GM12878 (cell line): ENCODE measurements at regions of chr11 and their contacts with region 1.

Region 1: GRCh38 chr11:61733120-61733978 is 19.1 kb upstream of the MYRF start:
- DNase-seq: peak; percentile 12
- ATAC-seq: peak; percentile 95
- H3K4me3 ChIP-seq: no peak overlapping the region
- H3K27ac ChIP-seq: no peak overlapping the region
- H3K4me1 ChIP-seq: no peaks in the 10 kb centered on the region
- H3K27me3 ChIP-seq: no peaks in the 10 kb centered on the region; a peak in 1 of 4 replicates
- CTCF ChIP-seq: peak; percentile 99
- EP300 ChIP-seq: no peak
- POLR2A ChIP-seq: no peak
- RAD21 ChIP-seq: peak; percentile 80

Region 2: GRCh38 chr11:61477727-61478148 is 255.6 kb before region 1 on chr11:
- CTCF ChIA-PET with region 1: interaction called, 4 read pairs
- POLR2A ChIA-PET with region 1: no interaction called
- RAD21 ChIA-PET with region 1: no interaction called
- SMC1A ChIA-PET with region 1: no interaction called
- in situ Hi-C with region 1: no loop called
- intact Hi-C with region 1: loop called (anchors 10 kb)
- DNase-seq: no peak
- ATAC-seq: peak; percentile 72
- H3K4me3 ChIP-seq: no peak overlapping the region
- H3K27ac ChIP-seq: no peak overlapping the region
- H3K4me1 ChIP-seq: no peaks in the 10 kb centered on the region
- H3K27me3 ChIP-seq: no peaks in the 10 kb centered on the region
- CTCF ChIP-seq: peak; percentile 86 to 95 (median 89)
- EP300 ChIP-seq: no peak
- POLR2A ChIP-seq: no peak
- RAD21 ChIP-seq: peak; percentile 82

Region 3: DNA sequence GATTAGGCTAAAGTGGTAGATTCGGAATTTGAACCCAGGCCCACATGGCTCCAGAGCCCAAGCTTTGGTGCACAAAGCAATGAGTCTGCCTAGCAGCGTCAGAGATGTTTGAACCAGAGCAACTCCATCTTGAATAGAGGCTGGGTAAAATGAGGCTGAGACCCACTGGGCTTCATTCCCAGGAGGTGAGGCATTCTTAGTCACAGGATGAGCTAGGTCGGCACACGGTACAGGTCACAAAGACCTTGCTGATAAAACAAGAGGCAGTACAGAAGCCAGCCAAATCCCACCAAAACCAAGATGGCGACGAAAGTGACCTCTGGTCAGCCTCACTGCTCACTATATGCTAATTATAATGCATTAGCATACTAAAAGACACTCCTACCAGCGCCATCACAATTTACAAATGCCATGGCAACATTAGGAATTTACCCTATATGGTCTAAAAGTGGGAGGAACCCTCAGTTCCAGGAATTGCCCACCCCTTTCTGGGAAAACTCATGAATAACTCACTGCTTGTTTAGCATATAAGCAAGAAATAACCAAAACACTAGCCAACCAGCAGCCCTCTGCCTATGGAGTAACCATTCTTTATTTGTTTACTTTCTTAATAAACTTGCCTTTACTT is 93.4 kb before region 1 on chr11:
- CTCF ChIA-PET with region 1: interaction called, 11 read pairs
- POLR2A ChIA-PET with region 1: no interaction called
- RAD21 ChIA-PET with region 1: interaction called, 6 read pairs
- SMC1A ChIA-PET with region 1: interaction called, 7 read pairs
- in situ Hi-C with region 1: no loop called
- intact Hi-C with region 1: no loop called
- DNase-seq: no peak
- ATAC-seq: no peak
- H3K4me3 ChIP-seq: no peak overlapping the region
- H3K27ac ChIP-seq: no peak overlapping the region
- H3K4me1 ChIP-seq: no peaks in the 10 kb centered on the region
- H3K27me3 ChIP-seq: peaks cover 0 to 2% of the 10 kb centered on the region in 2 experiments; a peak in 1 of 4 replicates
- CTCF ChIP-seq: no peak
- EP300 ChIP-seq: no peak
- POLR2A ChIP-seq: no peak
- RAD21 ChIP-seq: no peak

Region 4: DNA sequence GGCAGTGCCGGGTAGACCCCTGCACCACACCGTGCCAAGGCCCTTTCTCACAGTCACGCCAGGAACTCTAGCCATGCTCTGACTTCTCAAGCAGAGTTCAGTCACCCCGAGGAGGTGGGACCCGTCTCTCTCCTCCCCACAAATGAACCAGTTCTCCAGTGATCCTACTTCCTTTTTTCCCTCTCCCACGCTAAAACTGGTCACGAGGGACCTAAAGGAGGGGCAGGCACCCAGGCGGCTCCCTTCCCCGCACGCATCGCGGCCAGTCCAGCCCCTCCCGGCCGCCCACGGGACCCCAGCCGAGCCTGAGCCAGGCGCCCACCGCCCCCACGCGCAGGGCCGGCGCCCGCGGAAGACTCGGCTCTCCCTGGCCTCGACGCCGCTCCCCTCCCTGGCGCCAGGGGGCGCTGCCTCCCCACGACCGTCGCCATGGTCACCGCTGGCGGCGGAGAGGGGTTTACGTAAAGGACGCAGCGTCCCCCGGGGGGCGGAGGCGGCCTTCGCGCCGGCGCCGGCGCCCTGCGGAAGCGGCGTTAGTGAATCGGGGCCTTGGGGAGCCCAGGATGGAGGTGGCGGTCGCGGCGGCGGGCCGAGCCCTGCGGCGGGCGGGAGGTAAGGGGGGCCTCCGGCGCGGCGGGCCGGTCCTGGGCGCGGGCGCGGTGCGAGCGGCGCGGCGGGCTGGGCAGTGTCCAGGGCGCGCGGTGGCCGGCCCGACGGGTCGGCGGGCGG is 53.3 kb before region 1 on chr11 and contains the start of gene DAGLA:
- CTCF ChIA-PET with region 1: interaction called, 10 read pairs
- POLR2A ChIA-PET with region 1: no interaction called
- RAD21 ChIA-PET with region 1: interaction called, 6 read pairs
- SMC1A ChIA-PET with region 1: interaction called, 4 read pairs
- in situ Hi-C with region 1: no loop called
- intact Hi-C with region 1: loop called (anchors 2 kb)
- DNase-seq: no peak
- ATAC-seq: peak; percentile 91
- H3K4me3 ChIP-seq: no peak within 1 kb of the TSS
- H3K27ac ChIP-seq: no peak within 1 kb of the TSS
- H3K4me1 ChIP-seq: no peaks in the 10 kb centered on the region
- H3K27me3 ChIP-seq: peaks cover 6 to 11% of the 10 kb centered on the region in 2 experiments
- CTCF ChIP-seq: peak; percentile 79 to 95 (median 85)
- EP300 ChIP-seq: no peak
- POLR2A ChIP-seq: no peak
- RAD21 ChIP-seq: peak; percentile 52
- polyA plus RNA-seq, gene DAGLA: not detected

Region 5: GRCh38 chr11:61890536-61891330 is 157.4 kb after region 1 on chr11:
- CTCF ChIA-PET with region 1: no interaction called
- POLR2A ChIA-PET with region 1: no interaction called
- RAD21 ChIA-PET with region 1: no interaction called
- SMC1A ChIA-PET with region 1: no interaction called
- in situ Hi-C with region 1: no loop called
- intact Hi-C with region 1: no loop called
- DNase-seq: no peak
- ATAC-seq: peak; percentile 33
- H3K4me3 ChIP-seq: peak overlapping the region; percentile 83
- H3K27ac ChIP-seq: no peak overlapping the region
- H3K4me1 ChIP-seq: peaks cover 7% of the 10 kb centered on the region
- H3K27me3 ChIP-seq: no peaks in the 10 kb centered on the region
- CTCF ChIP-seq: peak in 1 of 3 experiments; percentile 6; a peak in 1 of 6 replicates
- EP300 ChIP-seq: no peak
- POLR2A ChIP-seq: no peak
- RAD21 ChIP-seq: no peak